HCT116 (cell line): ENCODE measurements at regions of chr12 and their contacts with region 1.

Region 1: GRCh38 chr12:119695034-119695433 is 27.1 kb downstream of the PRKAB1 start:
- DNase-seq: no peak
- ATAC-seq: peak; percentile 74
- H3K4me3 ChIP-seq: no peak overlapping the region
- H3K27ac ChIP-seq: no peak overlapping the region
- H3K4me1 ChIP-seq: no peaks in the 10 kb centered on the region
- H3K27me3 ChIP-seq: no peaks in the 10 kb centered on the region
- CTCF ChIP-seq: peak; percentile 22 to 67 (median 62); a peak in 4 of 6 replicates
- POLR2A ChIP-seq: no peak
- RAD21 ChIP-seq: peak; percentile 32

Region 2: DNA sequence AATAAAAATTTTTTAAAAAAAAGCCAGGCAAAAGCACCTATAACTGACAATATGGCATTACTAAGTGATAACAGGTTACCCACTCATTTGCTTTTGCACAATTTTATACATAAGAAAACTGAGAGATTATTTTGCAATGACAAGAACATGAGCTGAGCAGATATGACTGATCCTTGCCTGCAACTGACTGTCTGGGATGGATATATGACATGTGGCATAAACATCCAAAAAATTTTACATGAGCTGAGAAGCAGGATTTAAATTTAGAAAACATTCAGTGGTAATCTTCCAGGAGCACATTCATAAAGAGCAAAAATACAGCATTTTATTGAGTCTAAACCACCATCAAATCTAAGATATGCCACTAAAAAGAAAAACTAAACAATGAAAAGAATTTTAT is 226.7 kb before region 1 on chr12:
- CTCF ChIA-PET with region 1: no interaction called
- POLR2A ChIA-PET with region 1: no interaction called
- RAD21 ChIA-PET with region 1: no interaction called
- intact Hi-C with region 1: no loop called
- DNase-seq: no peak
- ATAC-seq: no peak
- H3K4me3 ChIP-seq: no peak overlapping the region
- H3K27ac ChIP-seq: no peak overlapping the region
- H3K4me1 ChIP-seq: no peaks in the 10 kb centered on the region
- H3K27me3 ChIP-seq: peaks cover 16% of the 10 kb centered on the region
- CTCF ChIP-seq: no peak
- POLR2A ChIP-seq: no peak
- RAD21 ChIP-seq: no peak

Region 3: DNA sequence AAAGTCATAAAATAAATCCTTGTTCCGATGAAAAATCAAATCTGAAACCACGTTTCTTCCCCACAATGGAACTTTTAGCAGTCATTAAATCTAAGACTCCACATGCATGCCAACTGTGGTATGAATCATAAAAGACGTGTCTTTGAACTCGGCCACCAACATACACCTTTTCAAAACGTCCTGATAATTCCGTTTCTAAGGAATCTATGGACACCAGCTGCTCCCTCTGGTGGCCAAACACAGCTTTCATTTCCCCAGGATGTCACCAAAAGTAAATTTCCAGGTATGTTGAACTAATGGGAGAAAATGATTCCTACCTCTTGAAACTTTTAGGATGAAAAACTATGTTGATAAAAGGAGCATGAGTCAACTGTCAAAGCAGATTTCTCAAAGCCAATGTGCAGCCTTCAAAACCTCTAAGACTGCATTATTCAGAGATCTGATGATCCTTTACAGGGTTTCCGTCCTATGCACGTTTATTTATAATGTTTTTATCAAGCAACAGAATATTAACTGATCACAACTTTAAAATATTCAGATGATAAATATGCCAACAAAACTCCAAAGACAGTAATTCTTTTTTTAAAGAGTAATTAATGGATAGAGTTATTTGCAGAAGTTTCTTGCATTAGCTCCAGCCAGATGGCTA is 85.9 kb after region 1 on chr12:
- CTCF ChIA-PET with region 1: interaction called, 11 read pairs
- POLR2A ChIA-PET with region 1: no interaction called
- RAD21 ChIA-PET with region 1: interaction called in 1 of 2 experiments, 3 read pairs
- intact Hi-C with region 1: loop called (anchors 5 kb)
- DNase-seq: peak; percentile 39
- ATAC-seq: peak; percentile 77
- H3K4me3 ChIP-seq: no peak overlapping the region
- H3K27ac ChIP-seq: no peak overlapping the region
- H3K4me1 ChIP-seq: peaks cover 6% of the 10 kb centered on the region in 2 experiments; a peak in 3 of 4 replicates
- H3K27me3 ChIP-seq: no peaks in the 10 kb centered on the region
- CTCF ChIP-seq: peak; percentile 64 to 93 (median 86)
- POLR2A ChIP-seq: no peak
- RAD21 ChIP-seq: peak; percentile 56

Region 4: DNA sequence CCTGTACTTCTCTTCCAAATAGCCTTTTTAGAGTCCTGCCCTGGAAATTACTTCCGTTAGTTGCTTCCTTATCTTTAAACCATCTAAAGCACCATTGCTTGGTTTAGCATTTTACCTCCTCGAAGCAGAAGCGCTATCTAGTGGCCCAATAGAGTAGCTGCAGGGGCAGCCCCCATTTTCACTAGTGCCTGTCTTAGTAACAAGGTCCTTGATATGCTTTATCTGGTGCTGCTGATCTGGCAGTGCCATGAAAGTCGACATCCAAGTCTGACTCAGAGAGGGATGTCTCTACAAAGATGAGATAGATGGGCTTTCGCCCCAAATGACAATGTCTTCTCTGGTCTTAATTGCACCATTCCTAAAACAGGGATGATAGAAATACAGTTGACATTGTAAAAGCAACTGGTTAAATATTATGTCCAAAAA is 207.1 kb after region 1 on chr12:
- CTCF ChIA-PET with region 1: interaction called, 4 read pairs
- POLR2A ChIA-PET with region 1: no interaction called
- RAD21 ChIA-PET with region 1: no interaction called
- intact Hi-C with region 1: loop called (anchors 1 kb)
- DNase-seq: peak; percentile 69
- ATAC-seq: peak; percentile 99
- H3K4me3 ChIP-seq: no peak overlapping the region
- H3K27ac ChIP-seq: no peak overlapping the region
- H3K4me1 ChIP-seq: peaks cover 0 to 4% of the 10 kb centered on the region in 2 experiments; a peak in 1 of 4 replicates
- H3K27me3 ChIP-seq: no peaks in the 10 kb centered on the region
- CTCF ChIP-seq: peak; percentile 71 to 89 (median 82)
- POLR2A ChIP-seq: no peak
- RAD21 ChIP-seq: peak; percentile 91

Region 5: GRCh38 chr12:119949145-119949544 is 254.1 kb after region 1 on chr12:
- CTCF ChIA-PET with region 1: no interaction called
- POLR2A ChIA-PET with region 1: no interaction called
- RAD21 ChIA-PET with region 1: no interaction called
- intact Hi-C with region 1: no loop called
- DNase-seq: no peak
- ATAC-seq: no peak
- H3K4me3 ChIP-seq: no peak overlapping the region
- H3K27ac ChIP-seq: no peak overlapping the region
- H3K4me1 ChIP-seq: no peaks in the 10 kb centered on the region
- H3K27me3 ChIP-seq: no peaks in the 10 kb centered on the region
- CTCF ChIP-seq: no peak
- POLR2A ChIP-seq: no peak
- RAD21 ChIP-seq: no peak

Region 6: DNA sequence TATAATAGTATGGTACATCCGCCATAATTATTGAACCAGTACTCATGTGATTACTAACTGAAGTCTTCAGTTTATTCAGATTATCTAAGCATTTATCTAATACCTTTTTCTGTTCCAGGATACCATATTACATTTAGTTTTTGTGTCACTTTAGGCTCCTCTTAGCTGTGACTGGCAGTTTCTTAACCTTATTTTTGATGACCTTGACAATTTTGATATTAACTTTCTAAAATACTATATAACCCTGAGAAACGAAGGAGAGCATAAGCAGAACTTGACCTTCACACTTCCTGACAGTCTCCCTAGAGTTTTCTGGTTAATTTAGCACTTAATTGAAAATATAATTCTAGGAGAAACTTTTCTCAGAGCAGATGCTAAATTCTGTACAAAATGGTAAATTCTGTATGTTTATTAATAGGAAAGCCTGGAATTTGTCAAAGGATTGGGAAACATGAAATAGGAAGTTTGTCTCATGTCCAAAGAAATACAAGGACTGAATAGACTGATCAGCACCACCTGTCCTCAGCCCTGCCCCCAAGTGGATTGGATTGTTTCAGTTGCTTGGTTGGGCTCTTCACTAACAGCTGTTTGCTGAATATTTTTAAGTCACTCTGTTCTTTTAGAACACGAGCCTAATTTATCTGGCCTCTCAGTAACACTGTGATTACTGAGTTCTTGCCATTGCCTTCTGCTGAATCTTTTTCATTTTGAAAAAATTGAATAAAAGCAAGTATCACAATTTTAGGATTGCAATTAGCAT is 300.0 kb after region 1 on chr12:
- CTCF ChIA-PET with region 1: no interaction called
- POLR2A ChIA-PET with region 1: no interaction called
- RAD21 ChIA-PET with region 1: no interaction called
- intact Hi-C with region 1: no loop called
- DNase-seq: no peak
- ATAC-seq: no peak
- H3K4me3 ChIP-seq: no peak overlapping the region
- H3K27ac ChIP-seq: no peak overlapping the region
- H3K4me1 ChIP-seq: peaks cover 0 to 6% of the 10 kb centered on the region in 2 experiments; a peak in 2 of 4 replicates
- H3K27me3 ChIP-seq: no peaks in the 10 kb centered on the region
- CTCF ChIP-seq: no peak
- POLR2A ChIP-seq: no peak
- RAD21 ChIP-seq: no peak